ENCODE measurements at regions of chr7 and their contacts with region 1.

Region 1: DNA sequence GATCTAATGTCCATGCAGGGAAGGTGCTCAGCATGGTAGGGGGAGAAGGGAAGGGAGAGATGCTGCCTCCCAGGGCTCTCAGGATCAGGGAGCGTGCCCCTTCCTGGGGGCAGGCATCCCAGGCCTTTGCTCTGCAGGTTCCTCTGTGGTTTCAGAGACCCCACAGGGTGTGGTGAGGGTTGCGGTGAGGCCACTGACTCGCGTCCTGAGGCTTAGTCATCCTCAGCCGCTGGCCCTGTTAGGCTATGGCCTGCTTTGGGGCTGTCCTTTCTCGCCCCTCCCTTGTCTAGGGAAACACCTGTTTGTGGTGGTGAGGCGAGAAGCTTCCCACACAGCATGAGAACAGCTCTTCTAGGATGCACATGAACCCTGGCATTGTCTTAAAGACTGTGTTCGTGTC is 558.3 kb upstream of the FOXK1 start:
- DNase-seq: peak; percentile 73
- H3K4me3 ChIP-seq: no peak overlapping the region
- H3K27ac ChIP-seq: no peak overlapping the region
- H3K4me1 ChIP-seq: no peaks in the 10 kb centered on the region
- H3K27me3 ChIP-seq: no peaks in the 10 kb centered on the region
- CTCF ChIP-seq: no peak

Region 2: GRCh38 chr7:3345699-3346481 is 777.9 kb before region 1 on chr7:
- CTCF ChIA-PET with region 1: no interaction called
- dilution Hi-C with region 1: no loop called
- in situ Hi-C with region 1: no loop called
- intact Hi-C with region 1: no loop called
- DNase-seq: no peak
- H3K4me3 ChIP-seq: no peak overlapping the region
- H3K27ac ChIP-seq: no peak overlapping the region
- H3K4me1 ChIP-seq: no peaks in the 10 kb centered on the region
- H3K27me3 ChIP-seq: no peaks in the 10 kb centered on the region
- CTCF ChIP-seq: no peak

Region 3: DNA sequence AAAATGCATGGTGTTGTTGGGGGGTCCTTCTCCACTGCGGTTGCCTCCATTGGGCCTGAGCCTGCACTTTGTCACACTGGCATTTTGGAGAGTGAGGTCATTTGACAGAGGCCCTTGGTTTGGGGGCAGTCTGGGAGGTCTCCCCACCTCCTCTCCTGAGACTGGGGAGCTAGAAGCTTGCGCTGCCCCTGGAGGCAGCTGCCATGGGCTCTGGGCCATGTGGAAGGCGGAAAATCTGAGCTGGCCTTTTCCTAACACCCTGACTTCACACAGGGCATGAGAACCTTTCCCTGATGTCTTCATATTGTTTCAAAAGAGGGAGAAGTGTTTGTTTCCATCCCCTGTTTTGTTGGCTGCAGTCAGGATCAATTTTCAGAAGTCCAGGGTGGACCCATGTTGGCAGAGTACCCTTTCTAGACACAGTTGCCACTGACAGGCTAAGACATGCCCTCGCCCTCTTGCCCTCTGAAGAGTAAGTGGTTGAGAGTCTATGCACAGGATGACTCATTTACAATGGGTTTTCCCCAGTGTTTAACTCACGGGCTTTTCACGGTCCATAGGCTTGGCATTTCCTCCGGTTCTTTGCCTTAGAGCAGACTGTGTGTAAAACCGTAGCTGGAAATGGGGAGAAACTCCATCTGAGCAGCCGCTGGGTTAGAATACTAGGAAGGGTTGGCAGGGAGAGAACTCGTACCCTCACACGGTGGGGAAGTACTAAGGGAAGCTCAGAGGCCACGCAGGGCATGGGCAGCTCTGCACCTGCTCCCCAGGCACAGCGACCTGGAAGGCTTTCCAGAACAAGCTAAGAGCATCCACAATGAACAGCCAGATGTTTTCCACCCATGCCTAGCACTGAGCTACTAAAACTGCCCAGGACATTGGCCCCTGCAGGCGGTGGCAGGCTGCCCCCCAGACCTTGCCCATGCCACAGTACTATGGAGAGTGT is 167.8 kb before region 1 on chr7:
- CTCF ChIA-PET with region 1: no interaction called
- dilution Hi-C with region 1: no loop called
- in situ Hi-C with region 1: no loop called
- intact Hi-C with region 1: no loop called
- DNase-seq: peak; percentile 95
- H3K4me3 ChIP-seq: no peak overlapping the region
- H3K27ac ChIP-seq: no peak overlapping the region
- H3K4me1 ChIP-seq: peaks cover 11% of the 10 kb centered on the region
- H3K27me3 ChIP-seq: no peaks in the 10 kb centered on the region
- CTCF ChIP-seq: no peak

Region 4: DNA sequence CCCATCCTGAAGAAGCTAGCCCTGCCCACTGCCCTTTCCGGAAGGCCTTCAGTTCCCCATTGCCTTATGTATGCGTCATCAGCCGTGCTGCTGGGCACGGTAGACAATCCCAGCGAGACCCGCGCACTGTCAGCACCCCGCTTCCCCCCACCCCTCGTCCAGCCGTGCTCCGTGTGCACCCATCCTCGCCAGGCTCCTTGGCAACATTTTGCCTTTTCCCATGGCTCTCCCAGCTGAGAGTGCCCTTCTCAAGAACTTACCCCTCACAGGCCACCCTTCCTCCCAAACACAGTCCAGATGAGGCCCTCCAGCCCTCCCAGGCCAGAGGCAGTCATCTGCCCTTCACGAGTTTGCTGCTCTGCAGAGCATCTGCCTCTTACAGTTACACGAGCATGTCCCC is 75.5 kb before region 1 on chr7:
- CTCF ChIA-PET with region 1: no interaction called
- dilution Hi-C with region 1: loop called (anchors 5 kb)
- in situ Hi-C with region 1: no loop called
- intact Hi-C with region 1: no loop called
- DNase-seq: no peak
- H3K4me3 ChIP-seq: no peak overlapping the region
- H3K27ac ChIP-seq: no peak overlapping the region
- H3K4me1 ChIP-seq: no peaks in the 10 kb centered on the region
- H3K27me3 ChIP-seq: no peaks in the 10 kb centered on the region
- CTCF ChIP-seq: no peak

Region 5: DNA sequence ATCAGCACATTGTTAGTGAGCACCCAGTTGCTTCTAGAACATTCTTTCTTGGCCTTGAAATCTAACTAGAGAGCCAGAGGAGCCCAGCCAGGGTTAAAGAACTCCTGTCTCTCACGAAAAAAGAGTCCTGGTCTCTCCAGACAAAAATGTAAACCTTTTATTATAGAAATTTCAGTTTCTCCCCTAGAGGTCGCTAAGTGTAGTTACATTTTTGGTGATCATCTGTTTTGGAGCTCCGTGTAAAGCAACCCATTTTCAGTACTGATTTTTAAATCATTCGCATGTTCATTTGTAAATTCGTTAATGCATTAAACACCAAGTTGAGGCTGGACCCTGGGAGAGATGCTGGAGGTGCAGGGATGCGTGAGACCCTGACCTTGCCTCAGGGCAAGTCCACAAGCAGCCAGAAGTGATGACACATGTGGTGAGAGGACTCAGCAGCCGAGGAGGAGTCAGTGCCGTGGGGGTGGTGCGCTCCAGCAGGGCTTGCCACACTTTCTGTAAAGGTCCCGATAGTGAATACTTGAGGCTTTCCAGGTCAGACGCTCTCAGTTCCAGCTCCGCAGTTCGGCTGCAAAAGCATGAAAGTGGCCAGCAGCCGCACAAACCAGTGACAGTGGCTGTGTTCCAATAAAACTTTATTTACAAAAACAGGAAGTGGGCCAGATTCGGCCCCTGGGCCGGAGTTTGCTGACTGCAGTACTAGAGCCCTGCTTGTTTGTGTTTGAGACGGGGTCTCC is 20.3 kb before region 1 on chr7:
- CTCF ChIA-PET with region 1: no interaction called
- dilution Hi-C with region 1: no loop called
- in situ Hi-C with region 1: no loop called
- intact Hi-C with region 1: no loop called
- DNase-seq: peak; percentile 43
- H3K4me3 ChIP-seq: no peak overlapping the region
- H3K27ac ChIP-seq: no peak overlapping the region
- H3K4me1 ChIP-seq: no peaks in the 10 kb centered on the region
- H3K27me3 ChIP-seq: no peaks in the 10 kb centered on the region
- CTCF ChIP-seq: no peak

Measured in mammary epithelial cell (primary cell).